ENCODE measurements at regions of chr20 and their contacts with region 1.

Region 1: DNA sequence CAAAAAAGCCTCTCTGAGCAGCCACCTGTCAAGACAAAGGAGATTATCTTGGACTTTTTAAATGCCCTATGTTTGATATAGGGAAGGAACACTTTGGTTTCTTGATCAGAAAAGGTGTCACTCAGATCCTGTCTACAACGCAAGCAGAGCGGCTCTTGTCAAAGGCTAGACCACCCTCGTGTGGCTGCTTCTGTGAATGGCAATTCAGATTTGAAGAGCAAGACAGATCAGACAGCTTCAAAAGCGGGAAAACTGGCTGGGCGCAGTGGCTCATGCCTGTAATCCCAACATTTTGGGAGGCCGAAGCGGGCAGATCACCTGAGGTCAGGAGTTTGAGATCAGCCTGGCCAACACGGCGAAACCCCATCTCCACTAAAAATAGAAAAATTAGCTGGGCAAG is 10.1 kb upstream of the NXT1 start:
- H3K4me3 ChIP-seq: no peak overlapping the region
- H3K27ac ChIP-seq: no peak overlapping the region
- H3K4me1 ChIP-seq: no peaks in the 10 kb centered on the region
- CTCF ChIP-seq: peak; percentile 64

Region 2: DNA sequence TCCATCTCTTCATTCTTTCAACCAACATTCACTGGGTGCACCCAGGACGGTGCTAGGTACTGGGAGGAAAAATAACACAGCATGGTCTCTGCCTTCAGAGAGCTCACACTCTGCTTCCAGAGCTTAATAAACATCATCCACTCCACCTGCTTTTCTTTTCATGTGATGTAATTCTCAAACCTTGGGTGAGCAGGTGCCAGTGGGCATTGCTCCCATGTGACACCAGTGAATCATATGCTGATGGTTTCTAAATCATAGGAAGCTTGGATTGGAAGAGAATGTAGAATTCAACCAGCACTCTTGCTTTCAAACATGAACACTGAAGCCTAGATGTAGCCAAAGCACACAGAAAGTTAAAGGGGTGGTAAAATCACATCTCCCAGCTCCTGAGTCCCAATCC is 945.9 kb before region 1 on chr20:
- CTCF ChIA-PET with region 1: no interaction called
- POLR2A ChIA-PET with region 1: no interaction called
- H3K4me3 ChIP-seq: no peak overlapping the region
- H3K27ac ChIP-seq: no peak overlapping the region
- H3K4me1 ChIP-seq: no peaks in the 10 kb centered on the region
- CTCF ChIP-seq: no peak

Region 3: DNA sequence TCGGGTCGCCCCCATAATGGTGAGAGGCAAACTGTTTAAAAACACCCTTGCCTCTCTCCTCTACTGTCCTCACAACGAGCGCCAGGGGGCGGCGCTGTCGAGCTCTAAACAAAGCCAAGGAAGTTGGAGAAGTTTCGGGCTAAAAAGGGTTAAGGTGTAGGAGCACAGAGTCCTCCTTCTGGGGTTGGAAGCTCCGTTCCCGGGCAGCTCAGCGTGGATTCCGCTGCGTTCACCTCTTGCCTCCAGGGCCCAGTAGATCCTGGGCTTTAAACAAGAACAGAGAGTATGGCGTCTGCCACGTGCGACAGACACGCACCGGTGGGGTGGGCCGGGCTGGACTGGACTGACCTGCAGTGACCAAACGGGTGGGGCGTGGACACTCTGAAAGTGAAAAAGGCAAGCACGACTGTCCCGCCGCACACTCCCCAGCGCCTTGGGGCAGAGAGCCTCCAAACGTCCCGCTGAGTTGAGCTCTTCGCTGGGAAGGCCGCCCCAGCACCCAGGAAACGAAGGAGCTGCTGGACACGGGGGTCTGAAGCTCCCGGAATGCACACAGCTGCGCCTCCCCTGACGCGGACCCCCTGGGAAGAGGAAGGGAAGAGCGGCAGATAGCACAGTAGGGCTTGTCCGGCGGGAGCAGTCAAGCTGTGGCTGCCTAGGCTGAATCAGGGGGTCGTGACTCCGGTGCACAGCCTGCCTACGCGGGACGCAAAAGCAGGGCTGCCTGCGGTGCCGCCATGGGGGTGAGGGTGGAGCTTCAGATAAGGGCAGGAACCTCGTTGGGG is 289.5 kb before region 1 on chr20:
- CTCF ChIA-PET with region 1: interaction called, 28 read pairs
- POLR2A ChIA-PET with region 1: no interaction called
- H3K4me3 ChIP-seq: peak overlapping the region; percentile 29
- H3K27ac ChIP-seq: no peak overlapping the region; the same call in 1 of the 2 replicates
- H3K4me1 ChIP-seq: no peaks in the 10 kb centered on the region
- CTCF ChIP-seq: peak; percentile 39

Region 4: DNA sequence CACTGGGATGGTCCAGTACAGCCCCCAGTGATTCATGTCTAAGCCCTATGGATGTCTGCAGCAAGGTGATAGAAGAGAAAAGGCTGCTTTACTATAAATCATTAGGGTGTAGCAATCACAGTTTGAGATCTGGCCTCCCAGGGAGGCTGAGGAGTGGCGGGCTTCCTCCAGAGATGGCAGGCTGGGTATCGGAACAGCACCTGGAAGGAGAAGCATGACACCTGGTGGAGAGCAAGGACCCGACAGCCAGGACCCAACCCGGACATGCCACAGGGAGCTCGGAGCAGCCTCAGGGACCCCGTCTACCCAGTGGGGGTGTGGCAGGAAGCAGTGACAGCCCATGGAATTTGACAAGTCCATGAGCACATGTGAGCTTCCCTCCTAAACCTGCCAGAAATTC is 139.6 kb before region 1 on chr20:
- CTCF ChIA-PET with region 1: interaction called, 14 read pairs
- POLR2A ChIA-PET with region 1: no interaction called
- H3K4me3 ChIP-seq: no peak overlapping the region
- H3K27ac ChIP-seq: no peak overlapping the region
- H3K4me1 ChIP-seq: no peaks in the 10 kb centered on the region
- CTCF ChIP-seq: peak; percentile 41; the same call in 1 of the 2 replicates

Region 5: GRCh38 chr20:23245553-23246181 is 94.9 kb before region 1 on chr20:
- CTCF ChIA-PET with region 1: interaction called, 14 read pairs
- POLR2A ChIA-PET with region 1: no interaction called
- H3K4me3 ChIP-seq: no peak overlapping the region
- H3K27ac ChIP-seq: no peak overlapping the region
- H3K4me1 ChIP-seq: no peaks in the 10 kb centered on the region
- CTCF ChIP-seq: peak; percentile 80

Region 6: GRCh38 chr20:23420943-23421931 is 80.7 kb after region 1 on chr20 and contains the start of gene NAPB:
- CTCF ChIA-PET with region 1: no interaction called
- POLR2A ChIA-PET with region 1: no interaction called
- H3K4me3 ChIP-seq: peak within 1 kb of the TSS; percentile 95
- H3K27ac ChIP-seq: peak within 1 kb of the TSS; percentile 62; the same call in 1 of the 2 replicates
- H3K4me1 ChIP-seq: peaks cover 5% of the 10 kb centered on the region
- CTCF ChIP-seq: peak; percentile 90

Region 7: GRCh38 chr20:23477223-23477622 is 136.7 kb after region 1 on chr20:
- CTCF ChIA-PET with region 1: no interaction called
- POLR2A ChIA-PET with region 1: no interaction called
- H3K4me3 ChIP-seq: no peak overlapping the region
- H3K27ac ChIP-seq: no peak overlapping the region
- H3K4me1 ChIP-seq: no peaks in the 10 kb centered on the region
- CTCF ChIP-seq: no peak

Region 8: GRCh38 chr20:23568320-23568970 is 227.9 kb after region 1 on chr20 and contains the start of gene CST9L:
- CTCF ChIA-PET with region 1: no interaction called
- POLR2A ChIA-PET with region 1: no interaction called
- H3K4me3 ChIP-seq: no peak within 1 kb of the TSS
- H3K27ac ChIP-seq: no peak within 1 kb of the TSS
- H3K4me1 ChIP-seq: no peaks in the 10 kb centered on the region
- CTCF ChIP-seq: no peak

Measured in HEK293 (cell line).